GM12878 (cell line): ENCODE measurements at regions of chr2 and their contacts with region 1.

Region 1: GRCh38 chr2:171325886-171326585 is 107.8 kb downstream of the METTL8 start:
- DNase-seq: no peak
- ATAC-seq: peak; percentile 71
- H3K4me3 ChIP-seq: peak overlapping the region; percentile 41; the same call in 1 of the 2 replicates
- H3K27ac ChIP-seq: peak overlapping the region; percentile 100
- H3K4me1 ChIP-seq: peaks cover 57% of the 10 kb centered on the region
- H3K27me3 ChIP-seq: no peaks in the 10 kb centered on the region
- CTCF ChIP-seq: no peak
- EP300 ChIP-seq: peak; percentile 61 to 62; a peak in 2 of 4 replicates
- POLR2A ChIP-seq: no peak
- RAD21 ChIP-seq: no peak

Region 2: GRCh38 chr2:170639635-170640034 is 686.4 kb before region 1 on chr2:
- CTCF ChIA-PET with region 1: no interaction called
- POLR2A ChIA-PET with region 1: no interaction called
- RAD21 ChIA-PET with region 1: no interaction called
- SMC1A ChIA-PET with region 1: no interaction called
- in situ Hi-C with region 1: no loop called
- intact Hi-C with region 1: no loop called
- DNase-seq: no peak
- ATAC-seq: no peak
- H3K4me3 ChIP-seq: no peak overlapping the region
- H3K27ac ChIP-seq: no peak overlapping the region
- H3K4me1 ChIP-seq: no peaks in the 10 kb centered on the region
- H3K27me3 ChIP-seq: no peaks in the 10 kb centered on the region
- CTCF ChIP-seq: no peak
- EP300 ChIP-seq: no peak
- POLR2A ChIP-seq: no peak
- RAD21 ChIP-seq: no peak

Region 3: GRCh38 chr2:171244970-171245782 is 80.9 kb before region 1 on chr2:
- CTCF ChIA-PET with region 1: interaction called, 3 read pairs
- POLR2A ChIA-PET with region 1: interaction called, 4 read pairs
- RAD21 ChIA-PET with region 1: interaction called, 33 read pairs
- SMC1A ChIA-PET with region 1: interaction called, 71 read pairs
- in situ Hi-C with region 1: no loop called
- intact Hi-C with region 1: no loop called
- DNase-seq: no peak
- ATAC-seq: no peak
- H3K4me3 ChIP-seq: no peak overlapping the region
- H3K27ac ChIP-seq: no peak overlapping the region
- H3K4me1 ChIP-seq: peaks cover 24% of the 10 kb centered on the region
- H3K27me3 ChIP-seq: no peaks in the 10 kb centered on the region
- CTCF ChIP-seq: no peak
- EP300 ChIP-seq: no peak
- POLR2A ChIP-seq: no peak
- RAD21 ChIP-seq: no peak; the same call in 1 of the 2 replicates

Region 4: GRCh38 chr2:171297951-171298350 is 28.1 kb before region 1 on chr2:
- CTCF ChIA-PET with region 1: no interaction called
- POLR2A ChIA-PET with region 1: no interaction called
- RAD21 ChIA-PET with region 1: no interaction called
- SMC1A ChIA-PET with region 1: no interaction called
- in situ Hi-C with region 1: no loop called
- intact Hi-C with region 1: no loop called
- DNase-seq: no peak
- ATAC-seq: no peak
- H3K4me3 ChIP-seq: no peak overlapping the region
- H3K27ac ChIP-seq: no peak overlapping the region
- H3K4me1 ChIP-seq: no peaks in the 10 kb centered on the region
- H3K27me3 ChIP-seq: no peaks in the 10 kb centered on the region
- CTCF ChIP-seq: no peak
- EP300 ChIP-seq: no peak
- POLR2A ChIP-seq: no peak
- RAD21 ChIP-seq: no peak

Region 5: DNA sequence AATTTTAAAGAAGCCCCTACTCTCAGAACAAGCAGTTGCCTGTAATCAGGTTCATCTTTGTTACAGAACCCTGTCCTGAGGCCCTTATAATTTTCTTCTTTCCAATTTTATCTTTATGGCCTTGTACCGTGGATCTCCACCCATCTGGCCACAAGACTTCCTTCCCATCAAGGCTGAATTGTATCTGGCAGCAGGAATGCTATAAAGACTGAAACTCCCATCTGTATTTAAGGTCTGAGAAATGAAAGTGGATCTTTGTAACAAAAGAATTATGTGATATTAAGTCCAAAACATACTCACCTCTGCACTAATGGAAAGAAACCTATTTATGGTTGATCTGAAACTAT is 16.0 kb after region 1 on chr2:
- CTCF ChIA-PET with region 1: interaction called, 35 read pairs
- POLR2A ChIA-PET with region 1: interaction called, 116 read pairs
- RAD21 ChIA-PET with region 1: interaction called, 215 read pairs
- SMC1A ChIA-PET with region 1: interaction called, 96 read pairs
- in situ Hi-C with region 1: no loop called
- intact Hi-C with region 1: no loop called
- DNase-seq: no peak
- ATAC-seq: peak; percentile 10; the same call in 2 of the 3 replicates
- H3K4me3 ChIP-seq: no peak overlapping the region
- H3K27ac ChIP-seq: peak overlapping the region; percentile 69
- H3K4me1 ChIP-seq: peaks cover 23% of the 10 kb centered on the region
- H3K27me3 ChIP-seq: no peaks in the 10 kb centered on the region
- CTCF ChIP-seq: no peak
- EP300 ChIP-seq: no peak
- POLR2A ChIP-seq: no peak
- RAD21 ChIP-seq: no peak

Region 6: DNA sequence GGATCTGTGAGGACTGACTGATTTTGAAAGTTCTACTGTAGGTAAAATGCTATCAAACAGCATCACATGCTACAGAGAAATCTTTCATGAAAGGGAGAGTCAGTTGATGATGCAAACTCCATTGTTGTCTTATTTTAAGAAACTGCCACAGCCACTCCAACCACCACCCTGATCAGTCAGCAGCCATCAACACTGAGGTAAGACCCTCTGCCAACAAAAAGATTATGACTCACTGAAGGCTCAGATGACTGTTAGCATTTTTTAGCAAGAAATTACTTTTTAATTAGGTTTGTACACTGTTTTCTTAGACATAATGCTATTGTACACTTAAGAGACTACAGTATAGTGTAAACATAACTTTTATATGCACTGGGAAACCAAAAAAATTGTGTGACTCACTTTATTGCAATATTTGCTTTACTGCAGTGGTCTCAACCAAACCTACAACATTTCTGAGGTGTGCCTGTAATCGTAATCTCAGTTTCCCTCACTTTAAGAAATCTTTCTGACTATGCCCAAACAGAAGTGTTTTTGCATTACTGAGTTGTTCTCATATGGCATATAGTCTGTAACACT is 65.0 kb after region 1 on chr2:
- CTCF ChIA-PET with region 1: interaction called, 3 read pairs
- POLR2A ChIA-PET with region 1: interaction called, 8 read pairs
- RAD21 ChIA-PET with region 1: interaction called, 17 read pairs
- SMC1A ChIA-PET with region 1: interaction called, 20 read pairs
- in situ Hi-C with region 1: no loop called
- intact Hi-C with region 1: no loop called
- DNase-seq: no peak
- ATAC-seq: peak; percentile 83
- H3K4me3 ChIP-seq: no peak overlapping the region
- H3K27ac ChIP-seq: peak overlapping the region; percentile 64
- H3K4me1 ChIP-seq: peaks cover 48% of the 10 kb centered on the region
- H3K27me3 ChIP-seq: no peaks in the 10 kb centered on the region
- CTCF ChIP-seq: no peak
- EP300 ChIP-seq: peak; percentile 58 to 64; a peak in 2 of 4 replicates
- POLR2A ChIP-seq: no peak
- RAD21 ChIP-seq: no peak

Region 7: DNA sequence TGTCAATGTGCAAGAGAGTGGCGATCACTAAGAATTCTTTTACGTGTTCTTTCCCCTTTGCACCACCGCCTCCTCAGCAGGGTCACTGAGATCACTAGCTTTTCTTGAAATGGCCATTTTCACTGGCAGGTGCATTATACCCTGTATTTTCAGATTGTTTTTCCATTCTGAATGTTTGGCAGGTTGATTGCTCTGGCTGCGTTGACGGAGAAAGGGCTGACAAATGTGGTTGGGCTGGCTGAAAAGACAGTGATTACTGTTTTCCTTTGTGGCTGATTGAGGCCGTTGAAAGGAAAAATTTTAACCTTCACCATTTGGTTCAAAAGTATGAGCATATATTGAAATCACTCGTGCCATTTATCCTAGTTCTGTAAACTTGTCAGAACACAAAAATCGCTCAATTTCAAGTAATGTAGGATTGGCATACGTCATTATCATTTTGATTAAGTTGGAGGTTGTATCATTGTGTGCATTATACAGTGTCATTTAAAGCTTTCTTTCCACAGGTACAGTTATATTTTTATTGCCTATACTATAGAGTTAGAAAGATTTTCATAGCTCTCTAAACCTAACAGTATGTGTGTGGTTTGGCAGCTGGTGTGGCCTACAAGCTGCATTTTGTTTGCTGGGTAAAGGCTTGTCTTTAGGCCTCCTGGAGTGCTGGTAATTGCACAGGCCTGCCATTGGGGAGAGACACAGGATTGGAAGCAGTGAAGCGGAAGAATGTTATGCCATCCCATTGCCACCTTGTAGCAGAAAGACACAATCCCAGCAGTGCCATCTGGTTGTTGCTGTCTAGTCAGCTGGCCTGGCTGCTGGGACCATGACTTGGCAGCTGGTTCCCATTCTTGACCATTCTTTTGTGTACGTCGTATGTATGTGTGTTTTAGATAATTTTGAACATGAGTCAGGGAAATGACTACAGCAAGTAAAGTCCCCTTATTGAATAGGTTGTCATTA is 398.0 kb after region 1 on chr2:
- CTCF ChIA-PET with region 1: no interaction called
- POLR2A ChIA-PET with region 1: no interaction called
- RAD21 ChIA-PET with region 1: no interaction called
- SMC1A ChIA-PET with region 1: no interaction called
- in situ Hi-C with region 1: no loop called
- intact Hi-C with region 1: no loop called
- DNase-seq: no peak
- ATAC-seq: no peak
- H3K4me3 ChIP-seq: no peak overlapping the region
- H3K27ac ChIP-seq: no peak overlapping the region
- H3K4me1 ChIP-seq: no peaks in the 10 kb centered on the region
- H3K27me3 ChIP-seq: no peaks in the 10 kb centered on the region
- CTCF ChIP-seq: no peak
- EP300 ChIP-seq: no peak
- POLR2A ChIP-seq: no peak
- RAD21 ChIP-seq: no peak